Activated naive CD4-positive, alpha-beta T cell treated with anti-CD3 and anti-CD28 coated beads for 36 hours (primary cell): ENCODE measurements at regions of chr2 and their contacts with region 1.

Region 1: DNA sequence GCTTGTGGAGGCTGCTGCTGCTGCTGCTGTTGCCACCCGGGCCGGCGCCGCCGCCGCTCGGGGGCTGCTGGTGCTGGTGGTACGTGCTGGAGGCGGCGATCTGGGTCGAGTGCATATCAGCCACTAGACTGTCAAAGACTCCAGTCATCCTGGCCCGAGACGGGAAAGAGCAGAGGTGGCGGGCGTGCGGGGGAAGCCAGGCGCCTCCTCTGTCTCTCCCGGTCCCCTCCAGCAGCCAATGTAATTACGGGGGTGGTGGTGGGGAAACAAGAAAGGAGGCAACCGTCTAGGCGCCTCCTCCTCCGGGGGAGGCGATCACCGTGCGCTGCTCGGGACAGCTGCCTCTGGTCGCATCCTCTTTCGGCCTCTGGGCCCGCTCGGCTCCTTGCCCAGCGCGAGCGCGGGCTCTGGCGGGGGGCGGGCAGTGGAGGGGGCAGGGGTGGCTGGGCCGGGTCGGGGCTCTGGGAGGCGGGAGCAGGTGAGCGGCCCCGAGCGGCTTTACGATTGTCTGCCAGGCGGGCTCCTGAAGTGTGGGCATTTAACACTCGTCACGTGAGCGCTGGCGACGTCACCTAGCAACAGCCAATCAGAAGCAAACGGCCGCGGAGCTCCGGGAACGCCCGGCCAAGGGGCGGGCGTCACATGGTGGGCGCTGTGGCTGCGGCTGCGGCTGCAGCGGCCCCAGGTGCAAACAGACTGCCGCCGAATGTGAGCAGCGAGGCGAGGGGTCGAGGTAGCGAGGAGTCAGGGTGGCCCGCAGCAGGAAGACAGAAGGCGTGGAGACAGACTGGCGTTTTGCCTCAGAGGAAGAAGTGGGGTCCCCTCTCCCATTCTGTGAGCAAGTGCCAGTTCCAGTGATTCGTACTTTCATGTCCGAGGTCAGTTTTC is at the start of gene DLX2:
- DNase-seq: peak; percentile 74
- H3K4me3 Mint-ChIP-seq: peak within 1 kb of the TSS; percentile 76
- H3K27ac Mint-ChIP-seq: peak within 1 kb of the TSS; percentile 24
- H3K4me1 Mint-ChIP-seq: peaks cover 50% of the 10 kb centered on the region
- H3K27me3 Mint-ChIP-seq: peaks cover 71% of the 10 kb centered on the region
- total RNA-seq, gene DLX2: not detected

Region 2: DNA sequence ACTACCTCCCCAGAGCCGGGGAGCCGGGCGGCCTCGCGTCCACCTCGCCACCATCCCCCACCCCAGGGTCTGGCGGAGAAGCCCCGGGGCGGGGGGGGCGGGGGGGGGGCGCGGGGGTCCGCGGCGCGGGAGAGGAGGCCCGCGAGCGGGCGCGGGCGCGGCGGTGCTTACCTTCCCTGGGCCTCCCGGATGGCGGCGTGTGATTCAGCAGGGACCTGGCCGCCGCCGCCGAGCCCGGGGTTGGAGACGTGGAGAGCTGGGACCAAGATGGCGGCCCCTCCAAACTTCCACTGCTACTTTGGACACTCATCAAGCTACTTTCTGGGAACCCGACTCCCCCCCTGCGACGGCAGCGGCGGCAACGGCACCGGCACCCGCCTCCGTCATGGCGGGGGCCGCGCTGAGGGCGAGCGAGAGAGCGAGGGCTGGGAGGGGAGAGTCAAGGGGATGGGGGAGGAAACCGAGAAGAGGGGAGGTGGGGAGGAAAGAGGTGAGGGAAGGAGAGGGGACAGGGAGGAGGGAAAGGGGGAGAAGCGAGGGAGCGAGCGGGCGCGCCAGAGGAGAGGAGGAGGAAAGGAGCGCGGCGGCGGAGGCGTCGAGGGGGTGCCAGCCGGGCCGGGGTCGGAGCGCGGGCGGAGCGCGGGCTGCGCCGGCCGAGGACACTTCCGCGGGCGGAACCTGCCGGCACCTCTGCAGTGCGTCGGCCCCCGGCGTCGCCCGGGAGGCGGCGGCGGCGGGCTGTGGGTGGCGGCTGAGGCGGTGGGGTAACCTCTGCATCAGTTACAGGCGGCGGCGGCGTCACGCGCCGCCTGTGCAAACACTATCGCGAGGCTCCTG is 942.3 kb before region 1 on chr2 and contains the start of gene TLK1:
- CTCF ChIA-PET with region 1: no interaction called
- intact Hi-C with region 1: loop called (anchors 10 kb)
- DNase-seq: peak; percentile 75
- H3K4me3 Mint-ChIP-seq: peak within 1 kb of the TSS; percentile 90
- H3K27ac Mint-ChIP-seq: peak within 1 kb of the TSS; percentile 93
- H3K4me1 Mint-ChIP-seq: peaks cover 57% of the 10 kb centered on the region
- H3K27me3 Mint-ChIP-seq: no peaks in the 10 kb centered on the region
- total RNA-seq, gene TLK1: 54.5 to 55.9 TPM

Region 3: GRCh38 chr2:171687287-171688128 is 415.1 kb before region 1 on chr2 and contains the start of gene DYNC1I2:
- CTCF ChIA-PET with region 1: interaction called, 3 read pairs
- intact Hi-C with region 1: loop called (anchors 5 kb)
- DNase-seq: peak; percentile 88
- H3K4me3 Mint-ChIP-seq: peak within 1 kb of the TSS; percentile 84
- H3K27ac Mint-ChIP-seq: peak within 1 kb of the TSS; percentile 85
- H3K4me1 Mint-ChIP-seq: peaks cover 15% of the 10 kb centered on the region
- H3K27me3 Mint-ChIP-seq: no peaks in the 10 kb centered on the region
- total RNA-seq, gene DYNC1I2: 37.8 to 38.9 TPM

Region 4: DNA sequence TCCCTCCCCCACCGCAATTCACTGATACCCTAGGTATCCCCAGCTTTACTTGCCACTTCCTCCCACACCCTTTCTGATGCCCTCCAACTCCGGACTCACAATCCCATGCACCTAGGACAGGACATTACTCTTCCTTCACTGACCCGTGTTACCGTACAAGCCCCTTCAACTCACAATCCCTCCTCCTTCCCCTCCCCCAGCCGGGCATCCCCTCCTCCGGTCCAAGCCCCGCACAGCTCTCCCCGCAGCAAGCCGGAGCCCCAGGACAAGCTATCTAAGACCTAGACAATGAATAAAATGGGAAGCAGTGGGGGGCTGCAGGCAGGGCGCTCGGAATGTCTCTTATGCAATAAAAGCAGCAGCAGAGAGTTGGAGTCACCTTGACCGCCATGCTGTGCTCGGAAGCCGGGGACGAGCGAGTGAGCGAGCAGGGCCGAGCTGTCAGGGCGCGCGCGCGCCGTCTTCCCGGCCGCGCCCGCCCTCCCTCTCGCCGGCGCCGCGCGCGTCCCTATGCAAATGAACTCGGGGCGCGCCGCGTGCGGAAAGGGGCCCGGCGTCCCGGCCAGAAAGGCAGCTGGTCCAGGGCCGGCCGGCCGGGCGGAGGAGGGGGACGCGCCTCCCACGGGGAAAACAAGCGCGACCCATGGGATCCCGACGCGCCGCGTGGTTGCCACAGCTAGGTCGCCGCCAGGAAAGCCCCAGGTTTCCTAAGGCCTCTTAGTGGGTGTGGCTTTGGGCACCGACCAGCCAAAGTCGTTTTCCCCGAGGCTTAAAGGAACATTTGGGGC is 208.6 kb before region 1 on chr2 and contains the start of gene SLC25A12:
- CTCF ChIA-PET with region 1: interaction called, 5 read pairs
- intact Hi-C with region 1: loop called (anchors 1 kb)
- DNase-seq: peak; percentile 78
- H3K4me3 Mint-ChIP-seq: peak within 1 kb of the TSS; percentile 100
- H3K27ac Mint-ChIP-seq: peak within 1 kb of the TSS; percentile 94
- H3K4me1 Mint-ChIP-seq: peaks cover 42% of the 10 kb centered on the region
- H3K27me3 Mint-ChIP-seq: no peaks in the 10 kb centered on the region
- total RNA-seq, gene SLC25A12: 15.0 to 17.4 TPM

Region 5: DNA sequence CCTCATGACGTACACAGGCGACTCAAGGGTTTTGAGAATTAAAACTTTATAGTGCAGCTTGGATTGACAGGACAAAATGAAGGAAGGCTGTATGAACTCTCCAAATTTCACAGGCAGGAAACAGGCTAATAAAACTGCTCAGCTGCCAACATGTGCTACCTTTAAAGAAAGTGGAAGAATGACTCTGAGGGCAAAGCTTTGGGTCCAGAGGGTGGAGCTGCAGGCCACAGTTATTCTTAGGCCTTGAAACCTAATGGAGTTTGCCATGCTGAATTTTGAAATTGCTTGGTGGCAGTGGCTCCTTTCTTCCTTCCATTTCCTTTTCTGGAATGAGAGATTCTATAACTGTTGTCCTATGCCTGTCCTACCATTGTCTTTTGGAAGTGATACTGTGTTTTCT is 145.6 kb before region 1 on chr2:
- CTCF ChIA-PET with region 1: no interaction called
- intact Hi-C with region 1: loop called (anchors 2 kb)
- DNase-seq: peak; percentile 14
- H3K4me3 Mint-ChIP-seq: no peak overlapping the region
- H3K27ac Mint-ChIP-seq: no peak overlapping the region
- H3K4me1 Mint-ChIP-seq: peaks cover 19% of the 10 kb centered on the region
- H3K27me3 Mint-ChIP-seq: no peaks in the 10 kb centered on the region

Region 6: GRCh38 chr2:172484253-172484652 is 381.6 kb after region 1 on chr2:
- CTCF ChIA-PET with region 1: no interaction called
- intact Hi-C with region 1: loop called (anchors 5 kb)
- DNase-seq: peak; percentile 37
- H3K4me3 Mint-ChIP-seq: no peak overlapping the region
- H3K27ac Mint-ChIP-seq: no peak overlapping the region
- H3K4me1 Mint-ChIP-seq: peaks cover 52% of the 10 kb centered on the region
- H3K27me3 Mint-ChIP-seq: no peaks in the 10 kb centered on the region